Ovary (tissue), 10 donors: ENCODE measurements at regions of chrX and their contacts with region 1.

Region 1: DNA sequence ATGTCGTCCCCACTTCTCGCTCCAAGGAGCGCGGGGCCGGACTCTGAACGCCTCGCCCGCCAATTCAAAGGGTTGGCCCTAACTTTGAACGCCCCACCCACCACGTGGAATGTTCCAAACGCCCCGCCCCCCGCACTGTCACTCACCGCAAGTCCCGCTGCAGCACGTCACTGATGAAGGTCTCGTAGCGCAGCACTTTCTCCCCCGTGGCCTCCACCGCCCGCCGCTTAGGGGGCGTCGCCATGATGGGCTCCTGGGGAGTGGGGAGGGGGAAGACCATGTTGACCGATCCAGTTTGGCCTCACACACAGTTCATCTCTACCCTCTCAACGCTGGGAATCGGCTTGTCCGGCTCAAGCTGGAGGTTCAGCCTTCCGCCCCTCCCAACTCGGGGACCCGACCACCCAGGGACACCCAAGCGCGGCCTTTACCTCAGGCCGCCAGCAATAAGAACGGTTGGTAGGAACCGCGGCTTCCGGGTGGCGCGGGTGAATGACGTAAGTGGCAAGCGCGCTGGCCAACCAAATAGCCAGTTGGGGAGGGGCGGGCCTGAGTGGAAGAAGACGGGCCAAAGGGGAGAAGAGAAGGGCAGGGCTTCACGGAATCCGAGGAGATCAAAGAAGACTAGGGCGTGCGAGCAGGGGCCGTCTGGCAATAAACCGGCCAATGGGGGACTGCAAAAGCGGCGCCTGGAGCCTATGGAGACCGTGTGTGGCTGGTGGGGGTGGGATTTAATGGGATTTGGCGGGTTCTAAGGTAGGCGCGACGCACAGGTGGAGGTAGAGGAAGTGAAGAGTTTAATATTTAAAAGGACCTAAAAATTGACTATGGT is at the start of gene UXT:
- DNase-seq: peak; percentile 91 to 95 (median 92)
- H3K4me3 ChIP-seq: peak within 1 kb of the TSS; percentile 60
- H3K27ac ChIP-seq: peak within 1 kb of the TSS; percentile 88 to 96
- H3K4me1 ChIP-seq: peaks cover 2% of the 10 kb centered on the region
- H3K27me3 ChIP-seq: no peaks in the 10 kb centered on the region
- CTCF ChIP-seq: no peak
- EP300 ChIP-seq: peak; percentile 33
- POLR2A ChIP-seq: peak; percentile 88
- total RNA-seq, gene UXT: 114 to 235 (median 151) TPM

Region 2: GRCh38 chrX:47233337-47234113 is 425.4 kb before region 1 on chrX:
- intact Hi-C with region 1: loop called in 1 of 4 experiments (anchors 2 kb)
- DNase-seq: peak; percentile 92 to 97 (median 96)
- H3K4me3 ChIP-seq: peak overlapping the region; percentile 67
- H3K27ac ChIP-seq: peak overlapping the region; percentile 90 to 94
- H3K4me1 ChIP-seq: no peaks in the 10 kb centered on the region
- H3K27me3 ChIP-seq: no peaks in the 10 kb centered on the region
- CTCF ChIP-seq: no peak
- EP300 ChIP-seq: peak; percentile 85
- POLR2A ChIP-seq: peak; percentile 32

Region 3: GRCh38 chrX:47560831-47561652 is 97.9 kb before region 1 on chrX and contains the start of gene ARAF:
- intact Hi-C with region 1: no loop called
- DNase-seq: peak; percentile 94 to 98 (median 97)
- H3K4me3 ChIP-seq: peak within 1 kb of the TSS; percentile 58
- H3K27ac ChIP-seq: peak within 1 kb of the TSS; percentile 82 to 94
- H3K4me1 ChIP-seq: peaks cover 2% of the 10 kb centered on the region
- H3K27me3 ChIP-seq: no peaks in the 10 kb centered on the region
- CTCF ChIP-seq: no peak
- EP300 ChIP-seq: no peak
- POLR2A ChIP-seq: peak; percentile 77
- total RNA-seq, gene ARAF: 24.9 to 76.9 (median 66.4) TPM

Region 4: GRCh38 chrX:47573394-47574075 is 85.4 kb before region 1 on chrX:
- intact Hi-C with region 1: no loop called
- DNase-seq: peak; percentile 77 to 86 (median 83)
- H3K4me3 ChIP-seq: peak overlapping the region; percentile 31
- H3K27ac ChIP-seq: peak overlapping the region; percentile 78 to 90
- H3K4me1 ChIP-seq: peaks cover 7% of the 10 kb centered on the region
- H3K27me3 ChIP-seq: no peaks in the 10 kb centered on the region
- CTCF ChIP-seq: no peak
- EP300 ChIP-seq: no peak
- POLR2A ChIP-seq: no peak